ENCODE measurements at regions of chr2 and their contacts with region 1.

Region 1: DNA sequence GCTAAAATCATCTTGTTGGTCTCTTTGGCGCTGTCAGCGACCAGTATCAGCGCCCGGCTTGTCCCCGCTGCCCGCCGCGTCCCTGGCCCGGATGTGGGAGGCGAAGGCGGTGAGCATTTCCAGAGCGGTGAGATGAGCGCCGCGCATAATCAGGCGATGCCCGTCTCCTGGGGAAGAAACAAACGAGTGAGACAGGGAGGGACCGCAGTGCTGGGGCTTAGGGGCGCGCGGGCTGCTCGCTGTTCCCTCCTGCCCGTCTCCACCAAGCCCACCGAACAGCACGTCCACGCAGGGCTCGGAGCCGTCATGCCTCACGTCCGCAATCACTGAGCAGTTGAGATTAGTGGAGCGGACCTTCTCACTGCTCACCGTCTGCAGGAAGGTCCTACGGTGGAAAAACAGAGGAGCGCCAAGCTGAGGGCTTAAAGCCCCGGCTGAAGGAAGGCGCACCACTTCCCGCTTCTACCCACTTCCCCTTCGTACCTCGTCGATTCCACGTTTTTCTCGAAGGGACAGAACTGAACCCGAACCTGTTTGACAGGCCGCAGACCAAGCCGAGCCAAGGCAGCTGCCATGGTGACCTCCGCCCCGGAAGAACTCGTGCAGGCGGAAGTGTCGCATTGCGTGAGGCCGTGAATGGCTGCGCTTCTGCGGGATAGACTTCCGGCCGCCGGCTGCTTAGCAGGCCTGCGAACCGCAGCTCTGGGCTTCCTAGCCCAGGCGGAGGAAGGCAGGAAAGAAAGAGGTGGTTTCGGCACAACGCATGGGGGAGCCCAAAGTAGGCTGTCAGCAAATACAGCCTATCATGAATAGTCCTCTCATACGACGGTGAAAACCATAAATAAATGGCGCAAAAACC is at the start of gene MRPL53:
- DNase-seq: peak; percentile 80 to 97 (median 80)
- ATAC-seq: peak; percentile 93
- H3K4me3 ChIP-seq: peak within 1 kb of the TSS; percentile 83
- H3K27ac ChIP-seq: peak within 1 kb of the TSS; percentile 95
- H3K4me1 ChIP-seq: peaks cover 12 to 16% of the 10 kb centered on the region in 2 experiments; a peak in 3 of 5 replicates
- H3K27me3 ChIP-seq: no peaks in the 10 kb centered on the region
- CTCF ChIP-seq: peak in 1 of 3 experiments; percentile 11; a peak in 2 of 6 replicates
- EP300 ChIP-seq: peak; percentile 33; the same call in 1 of the 2 replicates
- POLR2A ChIP-seq: peak; percentile 95
- RAD21 ChIP-seq: peak in 1 of 2 experiments; percentile 30; a peak in 1 of 4 replicates
- polyA plus RNA-seq, gene MRPL53: 24.3 to 41.1 TPM

Region 2: GRCh38 chr2:74357627-74358026 is 114.7 kb before region 1 on chr2:
- CTCF ChIA-PET with region 1: no interaction called
- POLR2A ChIA-PET with region 1: no interaction called
- in situ Hi-C with region 1: no loop called
- intact Hi-C with region 1: no loop called
- DNase-seq: no peak
- ATAC-seq: no peak
- H3K4me3 ChIP-seq: no peak overlapping the region
- H3K27ac ChIP-seq: no peak overlapping the region
- H3K4me1 ChIP-seq: no peaks in the 10 kb centered on the region
- H3K27me3 ChIP-seq: no peaks in the 10 kb centered on the region
- CTCF ChIP-seq: no peak
- EP300 ChIP-seq: no peak
- POLR2A ChIP-seq: no peak
- RAD21 ChIP-seq: no peak

Region 3: DNA sequence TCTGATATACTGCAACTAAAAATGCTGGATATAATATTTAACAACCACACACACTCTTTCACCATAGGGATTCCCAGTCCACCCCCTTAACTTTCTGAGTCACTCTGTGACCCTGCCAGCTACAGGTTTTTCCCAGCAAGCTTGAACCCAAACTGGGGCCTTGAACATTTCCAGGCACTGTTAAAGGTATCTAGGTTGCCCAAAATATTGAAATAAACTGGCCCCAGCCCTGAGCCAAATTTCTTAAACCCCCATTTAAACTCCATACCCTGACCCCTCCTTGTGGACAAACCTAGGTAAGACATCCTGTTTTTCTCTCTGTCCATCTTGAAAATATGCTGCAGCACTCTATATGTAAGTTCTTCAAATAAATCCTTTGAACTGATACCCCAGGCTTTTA is 72.5 kb before region 1 on chr2:
- CTCF ChIA-PET with region 1: no interaction called
- POLR2A ChIA-PET with region 1: no interaction called
- in situ Hi-C with region 1: no loop called
- intact Hi-C with region 1: loop called (anchors 5 kb)
- DNase-seq: peak; percentile 54 to 65 (median 58)
- ATAC-seq: peak; percentile 93
- H3K4me3 ChIP-seq: no peak overlapping the region
- H3K27ac ChIP-seq: no peak overlapping the region
- H3K4me1 ChIP-seq: no peaks in the 10 kb centered on the region
- H3K27me3 ChIP-seq: no peaks in the 10 kb centered on the region
- CTCF ChIP-seq: peak; percentile 65 to 80 (median 69)
- EP300 ChIP-seq: no peak
- POLR2A ChIP-seq: no peak
- RAD21 ChIP-seq: peak; percentile 61 to 78

Region 4: GRCh38 chr2:74493546-74493945 is 21.2 kb after region 1 on chr2:
- CTCF ChIA-PET with region 1: no interaction called
- POLR2A ChIA-PET with region 1: no interaction called
- in situ Hi-C with region 1: no loop called
- intact Hi-C with region 1: no loop called
- DNase-seq: no peak
- ATAC-seq: no peak
- H3K4me3 ChIP-seq: no peak overlapping the region
- H3K27ac ChIP-seq: no peak overlapping the region
- H3K4me1 ChIP-seq: peaks cover 4 to 15% of the 10 kb centered on the region in 2 experiments; a peak in 4 of 5 replicates
- H3K27me3 ChIP-seq: no peaks in the 10 kb centered on the region
- CTCF ChIP-seq: no peak
- EP300 ChIP-seq: no peak
- POLR2A ChIP-seq: no peak
- RAD21 ChIP-seq: no peak